WTC11 (cell line): ENCODE measurements at regions of chr5 and their contacts with region 1.

Region 1: DNA sequence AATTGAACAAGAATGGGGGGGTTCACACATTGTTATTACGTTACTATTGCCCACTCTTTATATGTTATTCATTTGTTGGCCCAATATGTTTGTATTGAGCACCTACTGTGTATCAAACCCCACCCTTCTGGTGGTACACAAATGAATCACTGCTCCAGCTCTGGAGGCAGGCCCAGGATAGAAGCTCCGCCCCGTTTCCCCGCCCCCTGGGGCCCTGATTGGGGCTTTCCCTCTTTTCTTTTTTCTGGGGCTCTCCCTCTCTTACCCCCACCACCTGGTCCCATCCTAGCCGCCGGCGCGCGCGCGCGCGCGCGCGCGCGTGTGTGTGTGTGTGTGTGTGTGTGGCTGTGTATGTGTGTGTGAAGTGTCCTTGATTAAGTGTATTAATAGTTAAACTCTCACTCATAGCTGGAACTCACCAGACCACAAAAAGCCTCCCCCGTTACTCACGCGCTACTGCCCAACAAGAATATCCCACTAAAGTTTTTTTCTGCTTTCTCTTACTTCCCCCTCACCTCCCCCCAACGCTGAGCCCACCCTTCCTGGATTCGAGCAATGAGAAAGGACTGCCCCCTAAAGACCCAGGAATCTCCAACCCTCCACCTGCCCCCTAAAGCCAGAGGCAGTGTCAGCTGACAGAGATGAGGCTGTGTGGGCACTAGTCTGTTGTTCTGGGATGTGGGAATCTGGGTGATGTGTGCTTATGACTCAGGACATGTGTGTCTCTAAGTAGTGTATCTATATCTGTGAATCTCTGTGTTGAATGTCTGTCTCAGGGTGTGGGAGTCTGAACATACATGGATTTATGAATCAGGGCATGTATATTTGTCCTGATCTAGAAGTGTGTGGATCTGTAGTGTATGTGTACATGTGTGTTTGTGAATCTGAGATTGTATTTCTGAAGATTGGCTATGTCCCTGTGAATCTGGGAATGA is 4.0 kb downstream of the CXXC5 start:
- DNase-seq: peak; percentile 92
- ATAC-seq: peak; percentile 33
- H3K4me3 Mint-ChIP-seq: peak overlapping the region; percentile 98
- H3K27ac Mint-ChIP-seq: peak overlapping the region; percentile 96
- H3K4me1 Mint-ChIP-seq: peaks cover 63% of the 10 kb centered on the region
- H3K27me3 Mint-ChIP-seq: no peaks in the 10 kb centered on the region
- CTCF ChIP-seq: no peak

Region 2: DNA sequence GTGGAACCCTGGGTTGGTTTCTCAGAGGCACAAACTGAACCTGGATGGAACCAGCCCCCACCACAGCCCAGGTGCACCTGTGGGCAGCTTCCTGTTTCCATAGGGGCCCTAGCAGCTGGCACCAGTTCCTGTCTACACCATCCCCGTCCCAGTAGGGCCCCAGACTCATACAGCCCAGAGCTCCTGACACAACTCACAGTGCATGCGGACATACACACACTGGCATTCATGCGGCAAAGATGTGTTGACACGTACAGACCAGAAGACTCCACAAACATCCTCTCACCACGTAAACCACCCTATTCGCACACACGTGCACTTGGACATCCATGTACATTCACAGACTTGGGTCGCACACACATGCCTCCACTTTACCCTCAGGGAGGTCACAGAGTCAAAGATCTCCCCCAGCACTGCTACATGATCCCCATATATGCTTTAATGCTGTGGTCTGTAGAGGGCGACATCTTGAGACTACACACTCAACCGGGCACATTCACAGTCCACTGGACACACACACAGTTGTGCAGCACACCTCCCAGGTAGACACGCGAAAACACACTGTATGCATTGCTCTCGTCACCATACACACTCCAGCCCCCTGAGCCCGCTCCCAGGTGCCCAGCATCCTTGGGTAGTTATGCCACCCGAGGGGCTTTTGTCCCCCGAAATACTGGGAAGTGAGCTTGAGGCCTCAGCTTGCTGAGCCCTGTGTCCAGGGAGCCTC is 18.4 kb after region 1 on chr5:
- CTCF ChIA-PET with region 1: interaction called, 12 read pairs
- POLR2A ChIA-PET with region 1: interaction called, 6 read pairs
- DNase-seq: no peak
- ATAC-seq: 0 out of 2 replicates have a peak, but pooled peaks have one; percentile 6
- H3K4me3 Mint-ChIP-seq: no peak overlapping the region
- H3K27ac Mint-ChIP-seq: peak overlapping the region; percentile 59
- H3K4me1 Mint-ChIP-seq: peaks cover 71% of the 10 kb centered on the region
- H3K27me3 Mint-ChIP-seq: no peaks in the 10 kb centered on the region
- CTCF ChIP-seq: no peak

Region 3: DNA sequence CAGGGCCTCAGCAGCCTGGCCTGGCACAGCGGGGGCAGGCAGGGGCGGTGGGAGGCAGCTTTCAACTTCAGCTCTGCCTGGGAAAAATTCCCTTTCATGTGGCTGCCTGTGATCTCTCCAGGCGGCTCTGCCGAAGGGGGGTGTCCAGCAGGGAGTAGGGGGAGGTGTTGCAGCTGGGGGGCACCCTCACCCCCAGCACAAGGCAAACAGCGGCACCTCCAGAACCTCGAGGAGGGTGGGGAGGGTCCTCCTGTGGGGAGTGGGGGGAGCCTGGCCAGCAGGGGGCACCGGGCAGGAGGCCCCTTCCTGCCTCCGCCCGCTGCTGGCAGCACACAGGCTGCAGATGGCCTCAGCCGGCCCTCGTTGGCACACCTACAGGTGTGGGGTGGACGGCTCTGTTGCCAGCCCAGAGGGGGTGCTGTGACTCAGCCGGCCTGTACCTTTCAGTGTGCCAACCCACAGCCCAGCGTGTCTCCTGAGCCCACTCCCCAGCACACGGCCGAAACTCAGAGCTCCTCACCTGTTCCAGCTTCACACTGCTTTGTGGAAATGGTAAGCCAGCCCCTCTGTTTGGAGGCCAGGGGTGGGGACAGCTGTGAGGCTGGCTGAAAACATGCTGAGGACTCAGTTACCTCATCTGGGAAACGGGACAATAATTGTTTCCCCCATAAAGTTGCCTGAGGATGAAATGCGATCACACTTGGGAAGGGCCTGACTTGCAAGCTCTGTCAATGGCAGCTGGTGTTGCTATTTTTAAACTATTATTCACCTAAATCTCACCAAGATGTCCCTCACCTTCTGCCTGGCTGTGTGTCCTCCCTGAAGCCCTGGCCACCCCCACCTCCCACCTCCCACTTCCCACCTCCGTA is 33.0 kb after region 1 on chr5:
- CTCF ChIA-PET with region 1: interaction called, 11 read pairs
- POLR2A ChIA-PET with region 1: interaction called, 5 read pairs
- DNase-seq: no peak
- ATAC-seq: no peak
- H3K4me3 Mint-ChIP-seq: no peak overlapping the region
- H3K27ac Mint-ChIP-seq: no peak overlapping the region
- H3K4me1 Mint-ChIP-seq: peaks cover 70% of the 10 kb centered on the region
- H3K27me3 Mint-ChIP-seq: no peaks in the 10 kb centered on the region
- CTCF ChIP-seq: no peak

Region 4: GRCh38 chr5:139696894-139697658 is 45.0 kb after region 1 on chr5:
- CTCF ChIA-PET with region 1: interaction called, 11 read pairs
- POLR2A ChIA-PET with region 1: interaction called, 10 read pairs
- DNase-seq: peak; percentile 77
- ATAC-seq: peak; percentile 23
- H3K4me3 Mint-ChIP-seq: peak overlapping the region; percentile 66
- H3K27ac Mint-ChIP-seq: peak overlapping the region; percentile 88; the same call in 1 of the 2 replicates
- H3K4me1 Mint-ChIP-seq: peaks cover 60% of the 10 kb centered on the region
- H3K27me3 Mint-ChIP-seq: peaks cover 28% of the 10 kb centered on the region
- CTCF ChIP-seq: no peak